GM23248 (cell line): ENCODE measurements at regions of chr18 and their contacts with region 1.

Region 1: GRCh38 chr18:21361307-21361880 is 119.4 kb downstream of the GREB1L start:
- DNase-seq: peak; percentile 9
- H3K4me3 ChIP-seq: no peak overlapping the region
- H3K27ac ChIP-seq: no peak overlapping the region
- H3K4me1 ChIP-seq: peaks cover 43% of the 10 kb centered on the region
- H3K27me3 ChIP-seq: no peaks in the 10 kb centered on the region

Region 2: DNA sequence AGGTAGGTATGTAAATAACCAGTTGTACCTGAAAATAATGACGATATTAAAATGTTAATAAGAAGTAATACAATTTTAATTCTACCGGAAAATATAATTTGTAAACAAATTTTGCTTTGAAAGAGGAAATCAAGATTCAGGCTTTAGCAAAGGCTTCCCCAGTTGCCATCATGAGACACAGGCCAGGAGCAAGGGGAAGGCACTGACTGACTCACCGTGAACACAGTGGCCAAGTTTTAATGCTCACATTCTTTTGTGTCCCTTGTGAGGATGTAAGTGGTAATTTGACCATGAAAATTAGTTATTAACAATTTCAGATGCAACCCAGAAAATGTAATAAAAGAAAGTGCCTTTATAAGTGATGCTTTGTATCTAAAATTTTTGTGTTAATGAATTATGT is 44.7 kb after region 1 on chr18:
- in situ Hi-C with region 1: loop called (anchors 10 kb)
- DNase-seq: peak; percentile 57
- H3K4me3 ChIP-seq: no peak overlapping the region
- H3K27ac ChIP-seq: no peak overlapping the region
- H3K4me1 ChIP-seq: no peaks in the 10 kb centered on the region; the same call in 1 of the 2 replicates
- H3K27me3 ChIP-seq: no peaks in the 10 kb centered on the region

Region 3: DNA sequence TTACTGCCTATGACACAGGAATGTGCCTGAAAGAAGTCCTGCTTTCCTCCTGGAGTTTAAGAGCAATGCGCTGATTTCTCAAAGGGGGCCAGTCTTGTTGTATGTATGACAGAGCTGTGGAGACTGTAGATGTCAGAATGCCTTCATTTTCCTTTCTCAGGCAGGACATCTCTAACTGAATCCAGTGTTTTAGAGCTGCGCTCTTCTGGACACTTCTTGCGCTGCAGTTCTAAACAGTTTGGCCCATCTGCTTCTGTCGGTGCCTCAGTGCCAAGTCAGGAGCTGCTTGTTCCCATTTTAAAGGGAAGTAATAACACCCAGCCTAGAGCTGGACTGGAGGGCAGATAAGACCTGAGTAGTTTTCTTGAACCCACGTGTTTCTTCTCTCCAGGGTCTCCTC is 147.7 kb after region 1 on chr18:
- in situ Hi-C with region 1: loop called (anchors 25 kb)
- DNase-seq: no peak
- H3K4me3 ChIP-seq: no peak overlapping the region
- H3K27ac ChIP-seq: no peak overlapping the region
- H3K4me1 ChIP-seq: no peaks in the 10 kb centered on the region
- H3K27me3 ChIP-seq: no peaks in the 10 kb centered on the region

Region 4: GRCh38 chr18:21980744-21981143 is 619.4 kb after region 1 on chr18:
- in situ Hi-C with region 1: no loop called
- DNase-seq: no peak
- H3K4me3 ChIP-seq: no peak overlapping the region
- H3K27ac ChIP-seq: no peak overlapping the region
- H3K4me1 ChIP-seq: no peaks in the 10 kb centered on the region
- H3K27me3 ChIP-seq: peaks cover 10% of the 10 kb centered on the region; the same call in 1 of the 2 replicates